GM13977 (cell line): ENCODE measurements at regions of chr22 and their contacts with region 1.

Region 1: GRCh38 chr22:41697126-41697775 is 2.1 kb upstream of the MEI1 start:
- DNase-seq: peak; percentile 87
- CTCF ChIP-seq: peak; percentile 97

Region 2: DNA sequence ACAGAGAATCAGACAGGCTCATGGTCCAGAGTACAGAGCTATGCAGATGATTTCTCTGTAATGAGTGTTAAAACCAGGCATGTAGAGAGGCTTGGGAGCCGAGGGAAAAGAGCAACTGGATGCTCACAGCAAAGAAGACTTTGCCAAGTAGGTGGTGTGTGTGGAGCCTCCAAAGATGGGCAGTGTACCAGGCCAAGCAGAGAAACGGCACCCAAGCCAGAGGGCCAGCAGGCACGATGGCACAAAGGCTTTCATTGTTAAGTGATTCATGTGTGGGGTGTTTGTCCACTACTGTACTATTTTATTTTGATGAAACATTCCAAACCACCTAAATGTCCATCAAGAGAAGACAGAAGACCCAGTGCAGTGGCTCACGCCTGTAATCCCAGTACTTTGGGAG is 422.4 kb before region 1 on chr22:
- in situ Hi-C with region 1: no loop called
- DNase-seq: no peak
- CTCF ChIP-seq: no peak

Region 3: DNA sequence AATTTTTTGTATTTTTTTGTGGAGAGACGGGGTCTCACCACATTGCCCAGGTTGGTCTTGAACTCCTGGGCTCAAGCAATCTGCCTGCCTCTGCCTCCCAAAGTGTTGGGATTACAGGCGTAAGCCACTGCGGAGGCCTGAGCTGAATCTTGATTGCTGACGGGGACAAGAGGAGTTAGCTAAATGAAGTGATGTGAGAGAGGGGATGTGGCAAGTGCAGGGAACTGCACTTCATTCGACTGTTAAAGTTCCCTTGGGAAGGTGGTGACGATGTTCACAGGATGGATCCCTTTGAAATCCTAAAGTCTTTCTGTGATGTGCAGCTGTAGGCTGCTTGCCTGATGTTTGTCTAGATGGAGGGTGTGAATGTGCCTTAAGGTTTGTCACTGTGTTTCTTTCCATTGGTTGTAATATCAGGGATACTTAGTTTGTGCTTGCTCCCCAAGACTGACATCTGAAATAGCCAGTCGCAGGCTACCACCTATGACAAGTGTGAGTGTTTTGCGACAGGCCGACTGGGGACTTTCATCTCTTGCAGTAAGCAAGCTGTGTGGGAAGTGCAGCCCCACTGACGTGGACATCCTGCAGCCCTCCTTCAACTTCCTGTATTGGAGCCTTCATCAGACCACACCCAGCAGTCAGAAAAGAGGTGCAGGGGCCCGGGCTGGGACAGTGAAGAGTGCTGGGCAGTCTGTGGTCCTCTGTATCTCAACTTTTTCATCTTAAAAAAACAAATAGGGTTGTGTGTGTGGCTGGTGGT is 83.7 kb after region 1 on chr22:
- in situ Hi-C with region 1: loop called (anchors 10 kb)
- DNase-seq: peak; percentile 86
- CTCF ChIP-seq: no peak

Region 4: GRCh38 chr22:41946629-41947423 is 249.6 kb after region 1 on chr22 and contains the start of gene CENPM:
- in situ Hi-C with region 1: loop called (anchors 10 kb)
- DNase-seq: peak; percentile 82
- CTCF ChIP-seq: no peak